Naive thymus-derived CD4-positive, alpha-beta T cell (primary cell): ENCODE measurements at regions of chr10 and their contacts with region 1.

Region 1: DNA sequence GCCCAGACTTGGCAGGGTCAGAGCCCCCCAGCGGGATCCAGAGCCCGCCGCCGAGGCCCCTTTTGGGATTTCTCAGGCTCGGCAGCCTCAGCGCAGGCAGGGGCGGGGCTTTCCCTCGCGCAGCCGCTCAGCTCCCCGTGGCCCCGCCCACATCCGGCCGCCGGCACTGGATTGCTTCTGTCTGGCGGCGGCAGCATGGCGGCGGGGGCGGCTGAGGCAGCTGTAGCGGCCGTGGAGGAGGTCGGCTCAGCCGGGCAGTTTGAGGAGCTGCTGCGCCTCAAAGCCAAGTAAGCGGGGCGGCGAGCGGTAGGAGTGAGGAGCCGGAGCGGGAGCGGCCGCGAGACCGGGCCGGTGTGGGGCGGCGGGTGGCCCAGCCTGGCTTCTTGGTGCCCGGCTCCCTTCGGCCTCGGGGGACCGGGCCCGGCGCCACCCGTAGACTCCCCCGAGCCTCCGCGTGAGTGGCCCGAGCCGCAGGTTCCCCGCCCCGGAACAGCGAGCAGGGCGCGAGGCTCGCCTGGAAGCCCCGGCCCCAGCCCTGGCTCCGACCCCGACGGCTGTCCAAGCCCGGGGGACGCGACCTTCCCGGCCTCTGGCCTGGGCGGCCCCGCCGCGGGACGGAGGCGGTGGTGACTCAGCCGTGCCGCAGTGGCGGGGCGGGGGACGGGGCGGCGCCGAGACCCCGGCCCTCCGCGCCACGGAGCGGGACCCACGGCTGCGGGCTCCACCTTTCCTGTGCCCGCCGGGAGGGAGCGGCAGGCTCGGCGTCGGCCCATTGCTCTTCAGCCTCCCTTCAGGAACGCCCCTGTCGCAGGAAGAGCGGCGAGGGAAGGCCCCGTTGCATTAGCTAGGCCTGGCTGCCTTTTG is at the start of gene GLRX3:
- DNase-seq: peak; percentile 79 to 95 (median 87)
- ATAC-seq: peak; percentile 99
- H3K4me3 ChIP-seq: peak within 1 kb of the TSS; percentile 63
- H3K4me3 Mint-ChIP-seq: peak within 1 kb of the TSS; percentile 81 to 95 (median 90)
- H3K27ac ChIP-seq: peak within 1 kb of the TSS; percentile 86
- H3K27ac Mint-ChIP-seq: peak within 1 kb of the TSS in 7 of 9 donors; percentile 48 to 93 (median 85)
- H3K4me1 ChIP-seq: peaks cover 23 to 32% of the 10 kb centered on the region in 2 donors
- H3K4me1 Mint-ChIP-seq: peaks cover 28 to 50% (median 46%) of the 10 kb centered on the region in 7 donors
- H3K27me3 ChIP-seq: no peaks in the 10 kb centered on the region
- H3K27me3 Mint-ChIP-seq: peaks cover 0 to 13% (median 6%) of the 10 kb centered on the region in 5 donors
- total RNA-seq, gene GLRX3: 30.1 to 72.9 (median 37.0) TPM

Region 2: GRCh38 chr10:129466703-129467358 is 669.6 kb before region 1 on chr10 and contains the start of gene MGMT:
- CTCF ChIA-PET with region 1: no interaction called
- POLR2A ChIA-PET with region 1: interaction called, 3 read pairs
- intact Hi-C with region 1: loop called (anchors 1 to 2 kb)
- DNase-seq: peak; percentile 91 to 98 (median 96)
- ATAC-seq: peak; percentile 99
- H3K4me3 ChIP-seq: peak within 1 kb of the TSS; percentile 74
- H3K4me3 Mint-ChIP-seq: peak within 1 kb of the TSS; percentile 74 to 90 (median 87)
- H3K27ac ChIP-seq: peak within 1 kb of the TSS; percentile 85
- H3K27ac Mint-ChIP-seq: peak within 1 kb of the TSS; percentile 71 to 91 (median 84)
- H3K4me1 ChIP-seq: peaks cover 11 to 13% of the 10 kb centered on the region in 2 donors
- H3K4me1 Mint-ChIP-seq: peaks cover 8 to 31% (median 26%) of the 10 kb centered on the region in 7 donors
- H3K27me3 ChIP-seq: no peaks in the 10 kb centered on the region
- H3K27me3 Mint-ChIP-seq: no peaks in the 10 kb centered on the region
- total RNA-seq, gene MGMT: 17.6 to 23.9 (median 21.8) TPM

Region 3: GRCh38 chr10:130171196-130171595 is 34.7 kb after region 1 on chr10:
- CTCF ChIA-PET with region 1: no interaction called
- POLR2A ChIA-PET with region 1: interaction called, 3 read pairs
- intact Hi-C with region 1: loop called (anchors 2 to 5 kb)
- DNase-seq: peak in 6 of 9 donors; percentile 54 to 70 (median 60)
- ATAC-seq: peak; percentile 83
- H3K4me3 ChIP-seq: no peak overlapping the region
- H3K4me3 Mint-ChIP-seq: peak overlapping the region; percentile 3 to 80 (median 54)
- H3K27ac ChIP-seq: no peak overlapping the region
- H3K27ac Mint-ChIP-seq: peak overlapping the region in 8 of 9 donors; percentile 2 to 63 (median 13)
- H3K4me1 ChIP-seq: peaks cover 18 to 28% of the 10 kb centered on the region in 2 donors
- H3K4me1 Mint-ChIP-seq: peaks cover 22 to 76% (median 64%) of the 10 kb centered on the region in 7 donors
- H3K27me3 ChIP-seq: no peaks in the 10 kb centered on the region
- H3K27me3 Mint-ChIP-seq: no peaks in the 10 kb centered on the region

Region 4: DNA sequence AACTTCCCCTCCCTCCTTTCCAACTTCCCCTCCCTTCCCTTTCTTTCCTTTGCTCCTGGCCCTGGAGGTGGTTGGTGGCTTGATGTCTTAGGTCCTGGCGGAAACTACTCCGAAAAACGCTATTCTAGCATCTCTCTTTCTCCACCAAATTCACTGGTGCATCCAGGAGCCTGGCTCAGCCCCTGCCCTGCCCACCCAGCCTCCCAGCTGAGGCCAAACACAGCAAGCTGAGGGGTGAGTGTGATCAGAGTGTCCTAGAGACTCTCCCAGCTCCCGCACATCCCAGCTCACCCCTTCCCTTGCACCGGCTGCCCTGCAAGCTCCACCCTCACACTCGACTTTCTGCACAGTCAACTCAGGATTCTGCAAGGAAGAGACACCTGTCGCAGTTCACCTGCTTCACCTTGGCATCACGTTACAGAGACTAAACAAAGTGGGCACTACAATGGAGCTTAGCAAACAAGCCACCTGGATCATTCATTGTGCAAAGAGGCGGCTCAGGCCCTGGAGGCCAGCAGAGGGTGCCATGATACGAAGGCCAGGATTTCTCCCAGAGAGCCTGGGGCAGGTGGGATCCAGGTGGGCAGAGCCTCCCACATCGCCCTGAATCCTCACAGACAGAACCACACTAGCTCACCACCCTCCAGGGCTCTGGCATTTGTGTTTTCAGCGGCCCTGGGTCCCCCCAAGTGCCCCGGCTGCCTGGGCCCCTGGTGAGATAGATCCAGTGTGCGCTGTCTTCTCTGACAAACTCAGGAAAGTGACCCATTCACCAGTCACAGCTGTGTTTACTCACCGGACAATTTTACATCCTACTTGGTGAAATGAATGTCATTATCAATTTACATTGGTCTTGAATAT is 1005.4 kb after region 1 on chr10:
- CTCF ChIA-PET with region 1: no interaction called
- POLR2A ChIA-PET with region 1: no interaction called
- intact Hi-C with region 1: no loop called
- DNase-seq: no peak
- ATAC-seq: no peak
- H3K4me3 ChIP-seq: no peak overlapping the region
- H3K4me3 Mint-ChIP-seq: no peak overlapping the region
- H3K27ac ChIP-seq: no peak overlapping the region
- H3K27ac Mint-ChIP-seq: no peak overlapping the region
- H3K4me1 ChIP-seq: no peaks in the 10 kb centered on the region
- H3K4me1 Mint-ChIP-seq: peaks cover 0 to 1% (median 0%) of the 10 kb centered on the region in 7 donors
- H3K27me3 ChIP-seq: no peaks in the 10 kb centered on the region
- H3K27me3 Mint-ChIP-seq: peaks cover 0 to 7% (median 0%) of the 10 kb centered on the region in 5 donors